HCT116 (cell line): ENCODE measurements at regions of chr16 and their contacts with region 1.

Region 1: DNA sequence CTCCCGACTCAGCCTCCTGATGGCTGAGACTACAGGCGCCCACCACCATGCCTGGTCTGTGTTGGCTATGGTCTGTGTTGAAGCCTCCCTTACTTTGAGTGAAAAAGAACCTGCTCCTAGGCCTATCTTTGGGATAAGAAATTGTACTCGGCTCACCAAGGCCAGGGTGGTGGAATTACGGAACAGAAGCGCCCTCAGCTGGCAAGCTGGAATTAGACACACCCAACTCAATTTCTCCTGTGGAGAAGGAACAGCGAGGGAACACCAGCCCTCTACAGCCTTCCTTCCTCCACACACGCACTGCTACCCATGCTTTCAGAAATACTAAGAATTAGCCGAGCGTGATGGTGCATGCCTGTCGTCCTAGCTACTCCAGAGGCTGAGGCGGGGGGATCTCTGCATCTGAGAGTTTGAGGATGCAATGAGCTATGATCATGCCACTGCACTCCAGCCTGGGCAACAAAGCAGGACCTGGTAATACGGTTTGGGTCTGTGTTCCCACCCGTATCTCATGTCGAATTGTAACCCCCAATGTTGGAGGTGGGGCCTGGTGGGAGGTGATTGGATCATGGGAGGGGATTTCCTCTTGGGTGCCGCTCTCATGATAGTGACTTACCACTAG is 40.1 kb upstream of the RBBP6 start:
- DNase-seq: peak; percentile 37
- ATAC-seq: peak; percentile 94
- H3K4me3 ChIP-seq: no peak overlapping the region
- H3K27ac ChIP-seq: no peak overlapping the region
- H3K4me1 ChIP-seq: peaks cover 0 to 4% of the 10 kb centered on the region in 2 experiments; a peak in 1 of 4 replicates
- H3K27me3 ChIP-seq: no peaks in the 10 kb centered on the region
- CTCF ChIP-seq: peak; percentile 61 to 73 (median 68)
- POLR2A ChIP-seq: no peak
- RAD21 ChIP-seq: peak; percentile 87

Region 2: DNA sequence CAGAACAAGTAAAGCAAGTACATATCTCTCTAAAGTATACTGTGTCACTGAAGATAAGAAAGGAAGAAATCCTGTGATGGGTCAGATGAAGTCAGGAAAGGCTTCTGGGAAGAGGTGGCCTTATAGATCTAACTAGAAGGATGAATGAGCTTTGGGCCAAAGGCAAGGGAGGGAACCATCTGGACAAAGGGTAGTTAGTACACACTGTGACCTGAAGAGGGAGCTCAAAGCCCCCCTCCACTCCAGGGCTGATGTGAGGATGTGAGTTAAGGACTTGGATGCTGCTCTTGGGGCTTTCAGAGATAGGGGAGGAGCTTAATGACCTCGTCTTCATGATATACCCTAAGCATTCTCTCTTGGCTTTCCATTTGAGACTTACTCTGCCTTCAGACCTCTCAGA is 428.5 kb before region 1 on chr16:
- CTCF ChIA-PET with region 1: interaction called, 37 read pairs
- POLR2A ChIA-PET with region 1: no interaction called
- RAD21 ChIA-PET with region 1: interaction called, 4 to 7 read pairs
- intact Hi-C with region 1: no loop called
- DNase-seq: peak; percentile 43
- ATAC-seq: peak; percentile 97
- H3K4me3 ChIP-seq: no peak overlapping the region
- H3K27ac ChIP-seq: no peak overlapping the region
- H3K4me1 ChIP-seq: no peaks in the 10 kb centered on the region
- H3K27me3 ChIP-seq: peaks cover 35% of the 10 kb centered on the region
- CTCF ChIP-seq: peak; percentile 38 to 75 (median 66); a peak in 5 of 6 replicates
- POLR2A ChIP-seq: no peak
- RAD21 ChIP-seq: peak; percentile 62

Region 3: GRCh38 chr16:24151482-24151939 is 347.8 kb before region 1 on chr16:
- CTCF ChIA-PET with region 1: no interaction called
- POLR2A ChIA-PET with region 1: no interaction called
- RAD21 ChIA-PET with region 1: no interaction called
- intact Hi-C with region 1: no loop called
- DNase-seq: no peak
- ATAC-seq: no peak
- H3K4me3 ChIP-seq: no peak overlapping the region
- H3K27ac ChIP-seq: no peak overlapping the region
- H3K4me1 ChIP-seq: no peaks in the 10 kb centered on the region
- H3K27me3 ChIP-seq: peaks cover 13% of the 10 kb centered on the region
- CTCF ChIP-seq: no peak
- POLR2A ChIP-seq: no peak
- RAD21 ChIP-seq: no peak

Region 4: GRCh38 chr16:24409049-24409448 is 90.3 kb before region 1 on chr16:
- CTCF ChIA-PET with region 1: interaction called, 11 read pairs
- POLR2A ChIA-PET with region 1: no interaction called
- RAD21 ChIA-PET with region 1: no interaction called
- intact Hi-C with region 1: loop called (anchors 1 kb)
- DNase-seq: peak; percentile 7
- ATAC-seq: peak; percentile 86
- H3K4me3 ChIP-seq: no peak overlapping the region
- H3K27ac ChIP-seq: no peak overlapping the region
- H3K4me1 ChIP-seq: no peaks in the 10 kb centered on the region
- H3K27me3 ChIP-seq: no peaks in the 10 kb centered on the region; the same call in 1 of the 2 replicates
- CTCF ChIP-seq: peak; percentile 34 to 65 (median 47); a peak in 4 of 6 replicates
- POLR2A ChIP-seq: no peak
- RAD21 ChIP-seq: peak; percentile 34; the same call in 1 of the 2 replicates

Region 5: DNA sequence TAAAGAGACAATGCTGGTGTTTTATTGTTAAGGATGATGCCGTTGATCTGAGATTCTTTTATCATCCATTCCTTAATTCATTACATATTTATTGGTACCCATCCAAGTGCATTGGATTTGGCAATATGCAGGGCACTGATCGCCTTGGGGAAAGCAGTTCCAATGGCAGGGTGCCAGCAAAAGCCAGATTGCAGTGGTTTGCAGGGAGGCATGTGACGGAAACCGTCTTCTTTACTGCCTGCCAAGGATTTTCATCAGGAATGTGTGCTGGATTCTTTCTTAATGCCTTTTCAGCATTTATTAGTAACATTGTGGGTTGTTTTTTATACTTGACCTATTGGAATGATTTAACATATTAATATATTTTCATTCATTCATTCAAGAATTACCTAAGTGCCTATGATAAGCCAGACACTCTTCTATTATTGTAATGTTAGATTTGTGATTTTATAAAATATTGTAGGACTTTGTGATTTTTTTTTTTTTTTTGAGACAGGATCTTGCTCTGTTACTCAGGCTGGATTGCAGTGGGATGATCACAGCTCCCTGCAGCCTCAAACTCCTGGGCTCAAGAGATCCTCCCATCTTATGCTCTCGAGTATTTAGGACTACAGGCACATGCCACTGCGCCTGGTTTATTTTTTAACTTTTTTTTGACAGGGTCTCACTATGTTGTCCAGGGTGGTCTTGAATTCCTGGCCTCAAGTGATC is 136.8 kb after region 1 on chr16:
- CTCF ChIA-PET with region 1: no interaction called
- POLR2A ChIA-PET with region 1: no interaction called
- RAD21 ChIA-PET with region 1: no interaction called
- intact Hi-C with region 1: no loop called
- DNase-seq: no peak
- ATAC-seq: no peak
- H3K4me3 ChIP-seq: no peak overlapping the region
- H3K27ac ChIP-seq: no peak overlapping the region
- H3K4me1 ChIP-seq: 0 out of 4 replicates have a peak, but pooled peaks cover 2 to 7% of the 10 kb centered on the region in 2 experiments
- H3K27me3 ChIP-seq: no peaks in the 10 kb centered on the region
- CTCF ChIP-seq: no peak
- POLR2A ChIP-seq: no peak
- RAD21 ChIP-seq: no peak

Region 6: DNA sequence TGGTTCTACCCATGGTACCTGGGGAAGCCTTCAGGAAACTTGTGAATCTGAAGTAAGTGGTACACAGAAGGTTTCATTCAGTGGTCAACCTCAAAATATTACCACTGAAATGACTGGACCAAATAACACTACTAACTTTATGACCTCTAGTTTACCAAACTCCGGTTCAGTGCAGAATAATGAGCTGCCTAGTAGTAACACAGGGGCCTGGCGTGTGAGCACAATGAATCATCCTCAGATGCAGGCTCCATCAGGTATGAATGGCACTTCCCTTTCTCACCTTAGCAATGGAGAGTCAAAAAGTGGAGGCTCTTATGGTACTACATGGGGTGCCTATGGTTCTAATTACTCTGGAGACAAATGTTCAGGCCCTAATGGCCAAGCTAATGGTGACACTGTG is 290.6 kb after region 1 on chr16:
- CTCF ChIA-PET with region 1: no interaction called
- POLR2A ChIA-PET with region 1: no interaction called
- RAD21 ChIA-PET with region 1: no interaction called
- intact Hi-C with region 1: no loop called
- DNase-seq: no peak
- ATAC-seq: no peak
- H3K4me3 ChIP-seq: no peak overlapping the region
- H3K27ac ChIP-seq: no peak overlapping the region
- H3K4me1 ChIP-seq: no peaks in the 10 kb centered on the region
- H3K27me3 ChIP-seq: no peaks in the 10 kb centered on the region
- CTCF ChIP-seq: no peak
- POLR2A ChIP-seq: no peak
- RAD21 ChIP-seq: no peak